ENCODE measurements at regions of chr9 and their contacts with region 1.

Region 1: DNA sequence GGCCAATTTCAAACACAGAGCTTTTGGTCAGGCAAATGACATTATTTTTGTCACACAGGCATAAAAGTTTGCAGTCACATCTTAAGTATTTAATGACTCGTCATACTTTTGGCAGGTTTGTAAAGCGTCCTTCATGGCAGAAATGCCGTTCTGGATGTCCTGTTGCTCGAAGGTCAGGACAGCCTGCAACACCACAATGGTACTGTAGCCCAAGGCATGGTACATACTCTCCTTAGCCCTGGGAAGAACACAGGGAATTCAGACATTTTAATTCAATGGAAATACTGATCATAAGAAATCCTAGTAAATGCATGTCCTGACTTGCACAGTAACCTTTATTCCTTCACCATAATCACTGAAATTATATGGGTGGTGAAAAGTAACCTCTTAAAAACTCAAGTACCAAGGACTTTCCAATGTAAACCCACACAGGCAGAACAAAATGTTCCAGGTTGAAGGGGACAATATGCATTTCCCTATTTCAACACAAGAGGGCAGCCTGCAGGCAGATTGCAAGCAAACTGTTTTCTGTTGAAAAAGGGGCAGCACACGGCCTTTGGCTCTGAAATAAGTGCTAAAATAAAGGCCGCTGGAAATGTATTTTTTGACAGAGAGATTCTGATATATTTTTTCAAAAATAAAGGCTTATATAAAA is 95.7 kb downstream of the TTC39B start:
- DNase-seq: peak in 3 of 5 donors; percentile 34 to 60 (median 53)
- ATAC-seq: peak; percentile 61 to 72 (median 67)
- H3K4me3 ChIP-seq: peak overlapping the region in 1 of 12 donors; percentile 6
- H3K27ac ChIP-seq: peak overlapping the region in 3 of 12 donors; percentile 14 to 66 (median 32)
- H3K4me1 ChIP-seq: peaks cover 0 to 12% (median 7%) of the 10 kb centered on the region in 12 donors
- H3K27me3 ChIP-seq: no peaks in the 10 kb centered on the region
- CTCF ChIP-seq: peak; percentile 82 to 97 (median 92)
- POLR2A ChIP-seq: no peak

Region 2: DNA sequence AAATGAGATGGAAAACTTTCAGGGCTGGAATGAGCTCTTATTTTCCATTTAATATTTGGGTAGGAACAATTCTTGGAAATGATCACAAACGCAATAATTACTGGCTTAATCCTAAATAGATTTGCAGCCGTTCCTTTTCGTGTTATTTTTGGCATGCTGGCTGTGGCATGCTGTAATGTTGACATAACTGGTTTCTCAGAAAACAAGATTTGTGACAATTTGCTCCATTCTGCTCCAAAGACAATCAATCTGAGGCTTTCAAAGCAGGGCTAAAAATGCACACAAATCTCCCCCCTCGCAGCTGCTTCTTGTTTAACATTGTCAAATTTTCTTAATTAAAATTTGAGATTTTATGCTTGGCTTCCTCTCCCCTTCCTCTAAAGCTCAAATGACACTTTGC is 55.5 kb before region 1 on chr9:
- intact Hi-C with region 1: no loop called
- DNase-seq: peak in 3 of 5 donors; percentile 33 to 65 (median 59)
- ATAC-seq: peak; percentile 63 to 86 (median 74)
- H3K4me3 ChIP-seq: no peak overlapping the region
- H3K27ac ChIP-seq: peak overlapping the region; percentile 50 to 88 (median 69)
- H3K4me1 ChIP-seq: peaks cover 0 to 44% (median 22%) of the 10 kb centered on the region in 12 donors
- H3K27me3 ChIP-seq: no peaks in the 10 kb centered on the region
- CTCF ChIP-seq: no peak
- POLR2A ChIP-seq: no peak

Region 3: GRCh38 chr9:15293804-15294321 is 82.6 kb after region 1 on chr9:
- intact Hi-C with region 1: no loop called
- DNase-seq: no peak
- ATAC-seq: no peak
- H3K4me3 ChIP-seq: peak overlapping the region in 1 of 12 donors; percentile 11
- H3K27ac ChIP-seq: peak overlapping the region in 10 of 12 donors; percentile 9 to 92 (median 30)
- H3K4me1 ChIP-seq: peaks cover 0 to 54% (median 15%) of the 10 kb centered on the region in 12 donors
- H3K27me3 ChIP-seq: no peaks in the 10 kb centered on the region
- CTCF ChIP-seq: no peak
- POLR2A ChIP-seq: no peak

Region 4: DNA sequence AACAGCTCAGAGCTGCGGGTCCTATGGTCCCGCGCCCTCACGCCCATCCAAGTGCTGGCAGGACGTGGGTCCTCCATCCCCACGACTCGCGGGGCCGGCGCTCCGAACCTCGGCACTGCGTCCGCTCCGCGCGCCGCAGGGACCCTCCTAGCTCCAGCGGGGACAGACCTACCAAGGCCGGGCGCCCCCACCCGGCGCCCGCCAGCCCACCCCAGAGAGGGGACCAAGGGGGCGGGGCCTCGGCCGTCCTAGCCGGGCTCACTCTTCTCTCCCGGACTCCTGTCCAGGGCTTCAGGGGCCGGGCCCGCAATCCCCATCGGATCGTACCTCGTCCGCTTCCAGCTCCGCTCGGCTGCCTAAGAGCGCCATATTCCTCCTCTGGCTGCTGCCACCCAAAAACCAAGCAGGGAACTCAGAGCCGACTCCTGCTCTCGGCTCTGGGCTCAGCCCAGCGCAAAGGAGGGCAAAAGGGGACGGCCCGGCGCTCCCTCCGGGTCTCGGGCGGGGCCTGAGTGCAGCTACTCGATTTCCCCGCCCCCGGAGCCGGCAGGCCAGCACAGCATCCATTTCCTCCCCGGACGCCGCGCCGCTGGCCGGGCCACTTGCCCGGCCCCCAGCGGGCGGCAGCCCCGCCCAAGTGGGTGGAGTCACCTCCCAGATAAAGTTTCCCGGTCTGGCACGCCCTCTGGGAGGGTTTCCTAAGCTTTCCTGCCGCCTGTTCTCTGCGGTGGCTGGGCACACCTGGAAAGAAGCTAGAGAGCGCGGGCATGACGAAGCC is 95.7 kb after region 1 on chr9 and contains the start of gene TTC39B:
- intact Hi-C with region 1: loop called in 3 of 10 experiments (anchors 5 to 10 kb)
- DNase-seq: peak; percentile 94 to 96 (median 95)
- ATAC-seq: peak; percentile 94 to 99 (median 99)
- H3K4me3 ChIP-seq: peak within 1 kb of the TSS; percentile 63 to 99 (median 86)
- H3K27ac ChIP-seq: peak within 1 kb of the TSS; percentile 6 to 88 (median 76)
- H3K4me1 ChIP-seq: peaks cover 0 to 19% (median 11%) of the 10 kb centered on the region in 12 donors
- H3K27me3 ChIP-seq: peaks cover 0 to 4% (median 0%) of the 10 kb centered on the region in 9 donors
- CTCF ChIP-seq: peak in 4 of 12 donors; percentile 16 to 45 (median 28)
- POLR2A ChIP-seq: peak in 1 of 2 donors; percentile 78
- total RNA-seq, gene TTC39B: 1.0 to 5.9 (median 1.5) TPM

Region 5: GRCh38 chr9:15349892-15350778 is 138.8 kb after region 1 on chr9:
- intact Hi-C with region 1: no loop called
- DNase-seq: no peak
- ATAC-seq: no peak
- H3K4me3 ChIP-seq: no peak overlapping the region
- H3K27ac ChIP-seq: no peak overlapping the region
- H3K4me1 ChIP-seq: no peaks in the 10 kb centered on the region
- H3K27me3 ChIP-seq: no peaks in the 10 kb centered on the region
- CTCF ChIP-seq: no peak
- POLR2A ChIP-seq: no peak

Region 6: GRCh38 chr9:15416880-15417279 is 205.6 kb after region 1 on chr9:
- intact Hi-C with region 1: loop called in 8 of 10 experiments (anchors 5 to 10 kb)
- DNase-seq: no peak
- ATAC-seq: peak in 1 of 4 donors; percentile 43
- H3K4me3 ChIP-seq: no peak overlapping the region
- H3K27ac ChIP-seq: no peak overlapping the region
- H3K4me1 ChIP-seq: peaks cover 0 to 3% (median under 1%) of the 10 kb centered on the region in 12 donors
- H3K27me3 ChIP-seq: no peaks in the 10 kb centered on the region
- CTCF ChIP-seq: peak in 9 of 12 donors; percentile 17 to 51 (median 38)
- POLR2A ChIP-seq: no peak

Region 7: GRCh38 chr9:15444142-15444541 is 232.9 kb after region 1 on chr9:
- intact Hi-C with region 1: no loop called
- DNase-seq: no peak
- ATAC-seq: no peak
- H3K4me3 ChIP-seq: no peak overlapping the region
- H3K27ac ChIP-seq: no peak overlapping the region
- H3K4me1 ChIP-seq: peaks cover 0 to 12% (median 0%) of the 10 kb centered on the region in 12 donors
- H3K27me3 ChIP-seq: no peaks in the 10 kb centered on the region
- CTCF ChIP-seq: no peak
- POLR2A ChIP-seq: no peak

Measured in heart left ventricle (tissue), 16 donors.